Left cardiac atrium (tissue), 4 donors: ENCODE measurements at regions of chr11 and their contacts with region 1.

Region 1: DNA sequence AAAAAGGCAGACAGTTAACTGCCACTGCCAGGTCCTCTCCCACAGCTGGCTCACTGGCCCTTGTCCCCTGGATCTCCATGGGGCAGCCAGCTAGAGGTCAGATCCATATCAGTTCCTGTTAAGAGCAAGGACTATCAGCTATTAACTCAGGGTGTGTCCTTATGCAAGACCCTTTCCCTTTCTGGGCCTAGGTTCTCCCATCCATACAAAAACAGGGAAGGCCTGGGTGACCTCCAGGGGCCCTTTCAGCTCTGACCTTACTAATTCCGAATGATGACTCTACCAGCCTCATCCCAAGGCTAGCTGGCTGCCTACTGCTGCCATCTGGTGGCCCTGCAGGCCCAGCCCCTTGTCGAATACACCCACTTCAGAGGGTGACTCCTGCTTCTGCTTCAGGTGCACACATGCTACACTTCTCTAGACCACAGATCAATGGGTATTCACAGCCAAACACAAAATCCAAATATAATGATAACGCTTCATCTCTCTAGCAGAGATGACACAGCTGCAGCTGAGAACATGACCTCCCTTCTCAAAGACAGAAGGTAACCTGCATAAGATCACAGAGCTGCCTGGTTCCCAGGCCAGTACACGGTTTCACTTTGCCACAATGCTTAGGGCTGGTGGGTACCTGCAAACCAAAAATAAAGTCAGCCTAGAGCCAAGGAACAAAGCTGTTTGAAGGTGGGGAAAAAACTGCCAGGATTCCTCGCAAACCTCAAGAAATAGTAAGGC is 34.1 kb downstream of the SERGEF start:
- DNase-seq: peak; percentile 35
- ATAC-seq: peak; percentile 79 to 85

Region 2: GRCh38 chr11:17598700-17599459 is 379.8 kb before region 1 on chr11:
- intact Hi-C with region 1: loop called (anchors 5 to 10 kb)
- DNase-seq: peak; percentile 78
- ATAC-seq: peak; percentile 82 to 87

Region 3: GRCh38 chr11:17730608-17731462 is 247.9 kb before region 1 on chr11:
- intact Hi-C with region 1: loop called (anchors 1 to 2 kb)
- DNase-seq: peak; percentile 80
- ATAC-seq: peak; percentile 82 to 88

Region 4: DNA sequence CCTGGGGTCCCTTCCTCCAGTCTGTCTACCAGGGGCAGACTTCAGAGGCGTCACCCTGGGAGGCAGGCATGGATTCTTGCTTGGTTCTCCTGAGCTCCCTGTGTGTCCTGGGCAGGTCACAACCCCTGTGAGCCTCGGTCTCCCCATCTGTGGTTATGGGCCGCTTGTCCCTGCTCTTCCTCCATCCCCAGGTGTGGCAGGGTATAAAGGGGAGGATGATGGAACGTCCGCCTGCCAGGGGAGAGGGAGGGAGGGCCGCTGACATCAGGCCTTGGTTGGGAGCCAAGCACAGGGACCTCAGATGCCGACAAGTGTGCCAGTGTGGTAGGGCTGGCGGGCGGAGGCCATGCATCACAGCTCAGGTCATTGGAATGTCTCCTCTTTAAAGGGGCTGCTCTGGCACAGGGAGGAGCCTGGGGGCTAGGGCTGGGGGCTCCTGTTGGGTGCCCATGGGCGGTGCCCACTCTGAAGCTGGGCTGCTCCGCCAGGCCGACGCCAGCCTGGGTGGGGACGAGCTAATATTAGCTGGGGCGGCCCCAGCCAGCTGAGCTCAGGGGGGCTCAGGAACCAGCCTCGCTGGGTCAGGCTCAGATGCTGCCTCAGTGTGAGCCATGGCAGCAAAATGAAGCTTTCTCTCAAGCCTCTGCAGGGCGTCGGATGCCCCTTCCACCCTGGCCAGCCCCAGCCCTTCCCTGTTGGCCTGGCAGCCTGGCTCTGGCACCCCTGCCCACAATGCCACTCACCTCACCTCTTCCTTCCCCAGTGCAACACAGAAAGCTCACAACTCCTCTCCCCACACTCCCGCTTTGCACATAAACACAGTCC is 231.4 kb before region 1 on chr11:
- intact Hi-C with region 1: loop called in 1 of 2 experiments (anchors 5 kb)
- DNase-seq: peak; percentile 14
- ATAC-seq: no peak

Region 5: GRCh38 chr11:17760102-17761029 is 218.4 kb before region 1 on chr11:
- intact Hi-C with region 1: loop called in 1 of 2 experiments (anchors 2 kb)
- DNase-seq: peak; percentile 37
- ATAC-seq: peak; percentile 85 to 88

Region 6: DNA sequence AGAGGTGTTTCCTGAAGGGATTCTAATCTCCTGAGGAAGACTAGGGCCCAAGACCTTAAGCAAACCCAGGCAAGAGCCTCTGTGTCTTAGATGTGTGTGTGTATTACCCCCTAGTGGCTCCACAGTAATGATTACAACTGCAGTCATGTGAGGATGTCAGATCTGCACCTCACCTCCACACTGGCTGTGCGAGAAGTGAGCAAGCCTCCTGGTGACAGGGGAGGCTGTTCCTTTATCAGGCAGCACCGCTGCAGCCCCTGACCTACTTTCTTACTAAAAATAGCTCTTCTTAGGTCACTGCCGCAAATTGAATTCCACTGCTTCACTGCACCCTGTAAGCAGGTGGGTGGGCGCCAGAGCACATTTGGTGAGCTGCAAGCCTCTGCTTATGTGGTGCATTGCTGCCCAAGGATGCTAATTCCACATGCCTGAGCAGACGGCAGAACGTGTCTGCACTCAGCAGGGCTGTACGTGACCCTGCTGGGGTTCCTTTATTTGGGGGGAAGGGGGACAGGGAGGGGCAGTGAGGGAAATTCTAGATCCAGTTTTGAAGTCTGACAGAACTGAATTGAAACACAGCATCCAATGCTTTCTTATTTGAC is 131.8 kb before region 1 on chr11:
- intact Hi-C with region 1: loop called in 1 of 2 experiments (anchors 10 kb)
- DNase-seq: no peak
- ATAC-seq: peak; percentile 34 to 55

Region 7: DNA sequence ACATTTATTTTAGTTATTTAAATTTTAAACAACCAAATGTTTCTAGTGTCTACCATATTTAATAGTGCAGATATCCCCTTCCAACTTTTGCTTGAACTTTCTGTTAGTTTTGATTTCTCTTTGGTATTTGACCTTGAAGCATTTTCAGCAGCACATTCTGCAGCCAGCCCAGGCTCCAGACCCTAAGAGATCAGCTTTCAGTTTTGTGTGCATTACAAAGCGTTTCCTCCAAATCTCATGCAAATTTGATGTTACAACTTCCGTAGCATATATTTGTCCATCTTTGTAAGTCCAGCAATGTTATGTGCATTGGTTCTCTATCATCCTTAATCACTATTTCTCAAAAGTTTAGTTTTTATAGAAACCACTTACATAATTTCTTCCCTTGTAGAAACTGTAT is 48.8 kb after region 1 on chr11:
- intact Hi-C with region 1: no loop called
- DNase-seq: no peak
- ATAC-seq: no peak